Activated naive CD4-positive, alpha-beta T cell treated with anti-CD3 and anti-CD28 coated beads for 36 hours (primary cell): ENCODE measurements at regions of chr12 and their contacts with region 1.

Region 1: DNA sequence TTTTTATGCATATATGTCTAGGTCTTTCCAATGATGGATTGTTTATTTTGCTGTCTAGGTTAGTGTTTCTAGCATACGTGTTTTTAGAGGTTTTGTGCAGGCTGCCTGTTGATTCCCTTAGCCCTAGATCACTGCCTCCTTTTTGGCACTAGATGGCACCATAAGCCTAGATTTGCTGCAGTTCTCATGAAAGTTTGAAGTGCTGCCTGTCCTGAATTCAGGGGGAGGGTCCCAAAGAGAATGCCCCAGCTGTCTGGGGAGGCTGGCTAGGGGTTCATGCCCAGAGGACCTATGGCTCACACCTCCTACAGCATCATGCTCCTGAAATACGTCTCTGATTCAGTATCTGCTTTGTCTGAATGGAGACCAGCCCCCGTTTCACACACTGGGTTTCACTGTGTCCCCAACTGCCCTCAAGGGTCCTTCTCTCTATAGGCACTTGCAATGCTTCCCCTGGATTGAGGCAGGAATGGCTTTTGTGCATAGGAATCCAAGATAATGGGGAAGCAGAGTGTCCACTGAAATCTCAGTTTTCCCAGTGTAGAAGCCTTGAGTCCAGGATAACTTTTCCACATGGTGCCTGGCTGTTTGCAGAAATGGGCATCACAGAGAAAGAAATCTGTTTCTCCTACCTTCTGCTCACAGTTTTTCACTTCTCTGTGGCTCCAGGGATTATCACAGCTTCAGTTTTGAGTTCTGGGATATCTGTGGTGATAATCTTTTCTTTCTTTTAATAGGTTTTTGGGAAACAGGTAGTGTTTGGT is 14.2 kb upstream of the TXNRD1 start:
- DNase-seq: peak; percentile 64
- H3K4me3 Mint-ChIP-seq: no peak overlapping the region
- H3K27ac Mint-ChIP-seq: no peak overlapping the region
- H3K4me1 Mint-ChIP-seq: peaks cover 2% of the 10 kb centered on the region
- H3K27me3 Mint-ChIP-seq: peaks cover 7% of the 10 kb centered on the region

Region 2: DNA sequence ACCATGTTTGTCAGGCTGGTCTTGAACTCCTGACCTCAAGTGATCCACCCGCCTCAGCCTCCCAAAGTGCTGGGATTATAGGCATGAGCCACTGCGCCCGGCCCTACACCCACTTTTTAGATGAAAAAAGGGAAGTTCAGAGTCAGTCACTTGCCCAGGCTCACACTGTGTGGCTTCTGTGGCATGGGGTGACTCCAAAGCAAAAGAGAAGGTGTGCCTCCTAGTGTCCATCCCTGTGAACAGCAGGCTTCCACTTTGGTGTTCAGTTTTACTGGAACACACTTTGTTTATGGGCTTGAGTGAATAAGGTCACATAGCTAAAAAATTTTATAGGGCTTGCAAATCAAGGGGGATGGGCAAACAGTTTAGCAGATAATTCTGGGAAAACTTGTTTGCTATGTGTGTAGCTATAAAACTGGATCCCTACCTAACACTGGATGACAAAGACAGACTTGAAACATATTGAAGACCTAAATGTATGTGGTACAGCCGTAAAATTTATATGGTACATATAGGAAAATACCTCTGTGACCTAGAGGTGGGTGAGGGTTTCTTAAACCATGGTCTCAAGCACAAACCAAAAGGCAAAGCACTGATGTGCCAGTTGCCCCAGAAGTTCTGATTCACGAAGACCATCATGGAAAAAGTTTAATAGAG is 157.1 kb after region 1 on chr12:
- CTCF ChIA-PET with region 1: interaction called, 14 read pairs
- intact Hi-C with region 1: loop called (anchors 1 kb)
- DNase-seq: peak; percentile 86
- H3K4me3 Mint-ChIP-seq: no peak overlapping the region
- H3K27ac Mint-ChIP-seq: no peak overlapping the region
- H3K4me1 Mint-ChIP-seq: no peaks in the 10 kb centered on the region
- H3K27me3 Mint-ChIP-seq: no peaks in the 10 kb centered on the region

Region 3: DNA sequence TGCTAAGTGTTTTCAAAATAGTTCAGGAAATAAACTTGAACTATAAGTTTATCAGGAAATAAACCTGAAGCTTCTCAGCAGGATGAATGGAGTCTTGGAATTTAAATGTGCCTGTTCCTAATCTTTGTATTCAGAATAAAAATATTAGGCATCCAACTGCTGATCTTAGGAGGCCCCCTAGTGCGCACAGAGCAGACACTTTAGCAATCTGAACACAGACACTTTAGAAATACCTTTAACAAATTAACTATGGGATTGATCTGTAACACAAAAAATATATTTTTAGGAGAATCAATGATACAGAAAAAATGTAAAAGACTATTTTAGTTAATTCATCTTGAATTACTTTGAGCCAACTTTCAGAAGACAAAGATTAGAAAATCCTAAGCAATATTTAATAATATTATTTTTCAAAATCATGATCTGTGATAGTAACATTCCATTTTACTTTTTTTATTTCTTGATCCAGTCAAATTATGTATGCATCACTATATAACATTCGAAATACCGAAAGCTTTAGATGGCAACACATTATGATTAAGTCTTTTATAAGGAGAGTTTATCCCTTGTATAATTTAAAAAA is 675.8 kb after region 1 on chr12:
- CTCF ChIA-PET with region 1: no interaction called
- intact Hi-C with region 1: loop called (anchors 2 kb)
- DNase-seq: peak; percentile 59
- H3K4me3 Mint-ChIP-seq: no peak overlapping the region
- H3K27ac Mint-ChIP-seq: no peak overlapping the region
- H3K4me1 Mint-ChIP-seq: peaks cover 3% of the 10 kb centered on the region
- H3K27me3 Mint-ChIP-seq: peaks cover 2% of the 10 kb centered on the region